Common myeloid progenitor, CD34-positive (primary cell): ENCODE measurements at regions of chr17 and their contacts with region 1.

Region 1: GRCh38 chr17:48259694-48260291 is 152.2 kb downstream of the SNX11 start:
- DNase-seq: peak; percentile 50 to 59 (median 54)
- H3K4me3 ChIP-seq: no peak overlapping the region
- H3K27ac ChIP-seq: no peak overlapping the region
- H3K4me1 ChIP-seq: peaks cover 0 to 14% (median 8%) of the 10 kb centered on the region in 4 experiments
- H3K27me3 ChIP-seq: no peaks in the 10 kb centered on the region

Region 2: GRCh38 chr17:48241131-48241591 is 18.6 kb before region 1 on chr17:
- CTCF ChIA-PET with region 1: interaction called, 53 read pairs
- POLR2A ChIA-PET with region 1: no interaction called
- DNase-seq: peak in 2 of 3 donors; percentile 49 to 69
- H3K4me3 ChIP-seq: no peak overlapping the region
- H3K27ac ChIP-seq: no peak overlapping the region
- H3K4me1 ChIP-seq: peaks cover 17 to 47% (median 24%) of the 10 kb centered on the region in 4 experiments
- H3K27me3 ChIP-seq: no peaks in the 10 kb centered on the region

Region 3: GRCh38 chr17:48270896-48271295 is 11.1 kb after region 1 on chr17:
- CTCF ChIA-PET with region 1: interaction called, 14 read pairs
- POLR2A ChIA-PET with region 1: no interaction called
- DNase-seq: no peak
- H3K4me3 ChIP-seq: no peak overlapping the region
- H3K27ac ChIP-seq: no peak overlapping the region
- H3K4me1 ChIP-seq: peaks cover 0 to 2% (median 0%) of the 10 kb centered on the region in 4 experiments
- H3K27me3 ChIP-seq: no peaks in the 10 kb centered on the region

Region 4: DNA sequence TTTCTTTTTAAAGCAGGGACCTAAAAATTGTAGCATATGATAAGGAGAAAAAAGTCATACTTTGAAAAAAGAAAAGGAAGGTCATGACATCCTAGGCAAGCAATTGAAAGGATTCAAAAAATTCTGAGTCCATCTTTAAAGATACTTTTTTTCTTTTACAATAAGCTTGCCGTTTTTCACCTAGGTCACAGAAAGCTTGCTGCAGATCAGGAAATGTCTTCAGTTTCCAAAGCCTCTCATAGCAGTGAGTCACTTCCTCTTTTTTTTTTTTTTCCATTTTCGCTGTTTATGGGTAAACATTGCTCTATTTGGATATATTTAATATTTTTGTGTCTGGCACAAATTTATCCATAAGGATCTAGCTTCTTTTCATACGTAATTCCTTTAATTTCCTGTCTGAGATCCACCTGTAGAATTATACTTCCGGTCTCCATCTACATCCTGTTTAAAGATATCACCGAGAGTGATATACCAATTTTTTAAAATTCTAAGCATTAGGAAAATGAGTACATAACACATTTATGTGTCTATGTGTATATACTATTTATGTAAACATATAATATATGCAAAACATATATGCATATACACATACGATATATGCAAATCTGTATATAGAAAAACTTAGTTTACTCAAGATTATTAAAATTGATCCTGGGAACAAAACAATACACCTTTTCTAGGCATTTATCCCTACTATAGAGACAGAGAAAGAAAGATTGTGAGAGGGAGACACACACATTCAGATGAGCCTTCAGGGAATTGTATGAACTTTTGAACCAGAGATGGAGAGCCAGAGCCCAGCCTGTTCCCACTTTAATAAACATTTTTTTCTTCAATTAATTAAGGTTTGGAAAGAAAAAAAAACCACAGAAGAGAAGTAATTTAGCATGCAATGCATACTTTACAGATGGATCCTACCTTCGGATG is 35.8 kb after region 1 on chr17:
- CTCF ChIA-PET with region 1: interaction called, 23 read pairs
- POLR2A ChIA-PET with region 1: no interaction called
- DNase-seq: peak; percentile 63 to 89 (median 85)
- H3K4me3 ChIP-seq: peak overlapping the region in 6 of 7 experiments; percentile 32 to 75 (median 60)
- H3K27ac ChIP-seq: peak overlapping the region; percentile 73 to 80
- H3K4me1 ChIP-seq: peaks cover 11 to 23% (median 17%) of the 10 kb centered on the region in 4 experiments
- H3K27me3 ChIP-seq: no peaks in the 10 kb centered on the region

Region 5: GRCh38 chr17:48307814-48308411 is 48.1 kb after region 1 on chr17:
- CTCF ChIA-PET with region 1: interaction called, 22 read pairs
- POLR2A ChIA-PET with region 1: no interaction called
- DNase-seq: peak; percentile 72 to 79 (median 75)
- H3K4me3 ChIP-seq: no peak overlapping the region
- H3K27ac ChIP-seq: no peak overlapping the region
- H3K4me1 ChIP-seq: no peaks in the 10 kb centered on the region
- H3K27me3 ChIP-seq: no peaks in the 10 kb centered on the region